Activated naive CD4-positive, alpha-beta T cell treated with anti-CD3 and anti-CD28 coated beads for 36 hours (primary cell): ENCODE measurements at regions of chr11 and their contacts with region 1.

Region 1: GRCh38 chr11:45332276-45332934 is 46.3 kb upstream of the SYT13 start:
- DNase-seq: peak; percentile 47
- H3K4me3 Mint-ChIP-seq: no peak overlapping the region
- H3K27ac Mint-ChIP-seq: no peak overlapping the region
- H3K4me1 Mint-ChIP-seq: no peaks in the 10 kb centered on the region
- H3K27me3 Mint-ChIP-seq: peaks cover 15% of the 10 kb centered on the region

Region 2: DNA sequence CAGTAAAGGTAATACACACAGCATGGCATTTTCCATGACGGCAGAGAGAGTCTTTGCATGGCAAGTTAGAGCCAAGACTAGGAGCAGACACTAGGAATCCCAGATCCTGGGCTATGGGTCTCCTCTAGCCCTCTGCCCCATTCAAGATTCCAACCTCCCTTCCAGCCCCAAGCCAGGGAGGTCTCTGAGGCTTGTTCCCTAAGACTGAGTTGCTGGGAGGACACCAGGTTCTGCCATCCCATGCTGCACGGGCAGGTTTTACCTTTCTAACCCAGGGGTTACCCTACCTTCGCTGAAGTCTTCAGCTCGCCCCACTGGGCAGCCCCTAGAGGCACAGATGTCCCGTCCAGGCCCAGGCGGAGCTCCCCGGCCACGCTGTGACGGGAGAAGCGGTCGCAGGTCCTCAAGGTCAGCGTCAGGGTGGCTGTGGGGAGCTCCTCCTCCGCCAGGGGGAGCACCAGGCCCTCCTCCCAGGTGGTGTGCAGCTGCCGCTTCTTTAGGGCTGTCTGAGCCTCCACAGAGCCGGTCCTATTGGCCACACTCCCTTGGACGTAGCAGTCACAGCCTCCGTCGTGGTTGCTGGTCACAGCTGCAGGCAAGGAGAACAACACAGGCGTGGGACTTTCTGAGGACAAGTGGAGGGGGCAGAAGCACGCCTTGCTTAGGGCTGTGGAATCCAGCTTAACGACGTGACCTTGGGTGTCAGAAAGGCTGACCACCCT is 80.1 kb before region 1 on chr11:
- CTCF ChIA-PET with region 1: interaction called, 3 read pairs
- intact Hi-C with region 1: loop called (anchors 5 kb)
- DNase-seq: peak; percentile 27
- H3K4me3 Mint-ChIP-seq: no peak overlapping the region
- H3K27ac Mint-ChIP-seq: no peak overlapping the region
- H3K4me1 Mint-ChIP-seq: no peaks in the 10 kb centered on the region
- H3K27me3 Mint-ChIP-seq: no peaks in the 10 kb centered on the region

Region 3: GRCh38 chr11:45289369-45289768 is 43.0 kb before region 1 on chr11:
- CTCF ChIA-PET with region 1: interaction called, 4 read pairs
- intact Hi-C with region 1: loop called (anchors 1 kb)
- DNase-seq: no peak
- H3K4me3 Mint-ChIP-seq: no peak overlapping the region
- H3K27ac Mint-ChIP-seq: no peak overlapping the region
- H3K4me1 Mint-ChIP-seq: no peaks in the 10 kb centered on the region
- H3K27me3 Mint-ChIP-seq: peaks cover 46% of the 10 kb centered on the region